ENCODE measurements at regions of chr22 and their contacts with region 1.

Region 1: GRCh38 chr22:31739795-31740201 is 10.1 kb downstream of the PRR14L start:
- DNase-seq: no peak
- ATAC-seq: no peak
- H3K4me3 Mint-ChIP-seq: no peak overlapping the region
- H3K27ac Mint-ChIP-seq: peak overlapping the region; percentile 34
- H3K4me1 Mint-ChIP-seq: peaks cover 40% of the 10 kb centered on the region
- H3K27me3 Mint-ChIP-seq: no peaks in the 10 kb centered on the region

Region 2: GRCh38 chr22:31695423-31695822 is 44.4 kb before region 1 on chr22:
- CTCF ChIA-PET with region 1: interaction called, 3 read pairs
- POLR2A ChIA-PET with region 1: no interaction called
- intact Hi-C with region 1: loop called in 1 of 2 experiments (anchors 5 kb)
- DNase-seq: no peak
- ATAC-seq: no peak
- H3K4me3 Mint-ChIP-seq: no peak overlapping the region
- H3K27ac Mint-ChIP-seq: no peak overlapping the region
- H3K4me1 Mint-ChIP-seq: peaks cover 19% of the 10 kb centered on the region
- H3K27me3 Mint-ChIP-seq: no peaks in the 10 kb centered on the region

Region 3: GRCh38 chr22:31818481-31819392 is 78.9 kb after region 1 on chr22:
- CTCF ChIA-PET with region 1: no interaction called
- POLR2A ChIA-PET with region 1: no interaction called
- intact Hi-C with region 1: no loop called
- DNase-seq: peak; percentile 59
- ATAC-seq: peak; percentile 88
- H3K4me3 Mint-ChIP-seq: no peak overlapping the region
- H3K27ac Mint-ChIP-seq: peak overlapping the region; percentile 33
- H3K4me1 Mint-ChIP-seq: peaks cover 13% of the 10 kb centered on the region
- H3K27me3 Mint-ChIP-seq: no peaks in the 10 kb centered on the region

Region 4: DNA sequence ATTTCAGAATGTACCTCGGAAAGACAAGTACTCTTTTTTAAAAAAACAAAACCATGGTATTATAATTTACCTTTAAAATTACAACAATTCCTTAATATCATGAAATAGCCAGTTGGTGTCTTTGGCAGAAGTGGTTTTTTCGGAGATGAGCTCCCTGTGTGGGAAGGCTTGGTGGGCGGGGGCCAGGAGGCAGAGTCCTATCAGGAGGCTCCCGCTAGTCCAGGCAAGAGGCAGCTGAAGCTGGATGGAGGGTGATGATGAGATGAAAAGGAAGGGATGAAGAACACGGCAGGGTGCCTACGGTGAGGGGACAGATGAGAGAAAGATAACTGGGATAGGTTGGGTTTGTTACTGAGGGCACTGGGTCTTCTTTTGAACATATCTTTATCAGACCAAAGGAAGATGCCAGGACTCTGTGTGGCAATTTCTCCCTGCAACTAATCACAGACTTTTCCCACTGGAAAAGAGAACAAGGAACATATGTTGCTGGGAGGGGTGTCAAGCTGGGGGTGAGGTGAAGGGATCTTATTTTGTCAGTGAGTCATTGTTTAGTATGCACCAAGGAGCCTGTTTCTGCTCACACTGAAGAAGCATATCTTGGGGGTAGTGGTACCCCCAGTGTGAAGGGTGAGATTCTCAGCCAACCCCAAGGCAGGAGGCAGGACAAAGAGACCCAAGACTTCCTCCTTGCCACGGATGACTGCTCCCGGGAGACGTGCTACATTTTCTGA is 113.1 kb after region 1 on chr22:
- CTCF ChIA-PET with region 1: no interaction called
- POLR2A ChIA-PET with region 1: no interaction called
- intact Hi-C with region 1: no loop called
- DNase-seq: no peak
- ATAC-seq: no peak
- H3K4me3 Mint-ChIP-seq: no peak overlapping the region
- H3K27ac Mint-ChIP-seq: no peak overlapping the region
- H3K4me1 Mint-ChIP-seq: no peaks in the 10 kb centered on the region
- H3K27me3 Mint-ChIP-seq: no peaks in the 10 kb centered on the region

Measured in activated CD4-positive, alpha-beta T cell treated with anti-CD3 and anti-CD28 coated beads for 36 hours (primary cell).